BJ (cell line): ENCODE measurements at regions of chr1 and their contacts with region 1.

Region 1: DNA sequence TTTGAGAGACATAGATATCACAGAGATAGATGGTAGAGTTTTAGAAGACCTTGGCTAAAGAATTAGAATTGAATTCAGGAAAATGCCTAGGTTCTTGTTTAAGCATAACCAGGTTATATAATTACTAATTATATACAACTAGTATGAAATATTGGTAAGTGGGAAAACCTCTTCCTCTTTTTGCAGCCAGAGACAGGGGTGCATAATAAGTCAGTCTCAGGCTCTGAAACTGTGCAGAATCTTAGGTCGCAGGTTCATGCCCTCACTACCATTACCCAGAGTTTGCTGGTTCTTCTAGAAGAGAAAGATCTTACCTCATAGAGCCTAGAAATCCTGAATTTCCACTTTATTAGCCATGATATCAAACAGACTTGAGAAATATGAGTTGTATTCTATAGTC is 183.3 kb downstream of the NEK7 start:
- DNase-seq: no peak
- H3K4me3 ChIP-seq: no peak overlapping the region
- H3K27me3 ChIP-seq: no peaks in the 10 kb centered on the region
- CTCF ChIP-seq: no peak

Region 2: DNA sequence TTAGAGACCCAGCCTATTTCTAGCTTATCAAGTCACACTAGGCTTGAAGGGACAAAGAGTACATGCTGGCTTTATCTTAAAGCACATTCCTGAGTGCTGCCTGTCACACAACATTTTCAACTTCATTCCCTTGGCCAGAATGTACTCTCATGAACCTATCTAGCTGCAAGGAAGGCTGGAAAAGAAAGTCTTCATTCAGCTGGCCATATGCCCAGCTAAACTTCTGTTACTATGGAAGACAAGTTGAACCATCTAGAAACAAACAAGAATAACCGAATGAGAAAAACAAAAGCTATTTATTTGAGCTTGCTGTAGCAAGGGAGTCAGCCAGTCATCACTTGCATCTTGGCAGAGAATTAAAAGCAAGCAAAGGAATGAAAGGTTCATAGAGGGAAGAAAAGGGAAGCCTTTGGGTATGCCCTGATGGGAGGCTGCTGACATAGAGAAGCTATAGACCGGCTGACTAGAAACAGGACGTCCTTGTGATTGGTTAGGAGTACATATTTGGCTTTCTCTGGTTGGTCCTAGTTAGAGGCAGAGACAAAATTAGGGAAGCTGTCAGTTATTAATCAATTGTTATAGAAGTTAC is 75.0 kb before region 1 on chr1:
- CTCF ChIA-PET with region 1: no interaction called
- POLR2A ChIA-PET with region 1: interaction called, 10 read pairs
- DNase-seq: no peak
- H3K4me3 ChIP-seq: no peak overlapping the region
- H3K27me3 ChIP-seq: no peaks in the 10 kb centered on the region
- CTCF ChIP-seq: no peak